ENCODE measurements at regions of chr7 and their contacts with region 1.

Region 1: DNA sequence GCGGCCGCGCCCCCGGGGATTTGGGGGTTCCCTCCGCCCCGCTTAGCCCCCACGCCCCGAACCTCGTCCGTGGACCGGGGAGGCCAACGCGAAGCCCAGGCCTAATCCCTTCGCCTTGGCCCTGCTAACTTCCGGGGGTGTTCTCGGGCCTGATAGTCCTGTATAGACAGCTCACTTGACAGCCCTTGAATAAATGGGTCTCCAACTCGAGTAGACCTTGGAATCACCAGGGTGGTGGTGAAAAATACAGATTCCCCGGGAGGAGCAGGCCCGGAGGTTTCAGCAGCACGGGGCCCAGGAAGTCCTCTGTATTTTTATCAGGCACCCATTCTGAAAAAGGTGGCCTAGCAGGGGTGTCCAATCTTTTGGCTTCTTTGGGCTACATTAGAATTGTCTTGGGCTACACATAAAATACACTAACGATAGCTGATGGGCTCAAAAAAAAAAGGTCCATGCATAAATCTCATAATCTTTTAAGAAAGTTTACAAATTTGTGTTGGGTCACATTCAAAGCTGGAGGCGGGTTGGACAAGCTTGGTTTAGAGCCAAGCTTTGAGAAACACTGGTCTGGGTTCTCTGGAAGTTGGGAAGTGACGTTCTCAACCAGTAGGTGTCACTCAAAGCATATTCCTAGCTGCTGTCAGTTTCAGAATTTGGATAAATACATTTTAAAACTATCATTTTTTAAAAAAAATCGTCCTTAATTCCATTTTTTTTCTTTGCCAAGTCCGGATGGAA is 221.7 kb downstream of the PHTF2 start:
- DNase-seq: peak; percentile 10
- H3K4me3 Mint-ChIP-seq: peak overlapping the region; percentile 78
- H3K27ac Mint-ChIP-seq: peak overlapping the region; percentile 25
- H3K4me1 Mint-ChIP-seq: peaks cover 14% of the 10 kb centered on the region
- H3K27me3 Mint-ChIP-seq: peaks cover 39% of the 10 kb centered on the region

Region 2: GRCh38 chr7:77910124-77910523 is 110.2 kb before region 1 on chr7:
- intact Hi-C with region 1: no loop called
- DNase-seq: no peak
- H3K4me3 Mint-ChIP-seq: no peak overlapping the region
- H3K27ac Mint-ChIP-seq: no peak overlapping the region
- H3K4me1 Mint-ChIP-seq: peaks cover 6% of the 10 kb centered on the region
- H3K27me3 Mint-ChIP-seq: no peaks in the 10 kb centered on the region

Region 3: GRCh38 chr7:77940647-77941046 is 79.7 kb before region 1 on chr7:
- intact Hi-C with region 1: loop called (anchors 10 kb)
- DNase-seq: no peak
- H3K4me3 Mint-ChIP-seq: no peak overlapping the region
- H3K27ac Mint-ChIP-seq: no peak overlapping the region
- H3K4me1 Mint-ChIP-seq: peaks cover 11% of the 10 kb centered on the region
- H3K27me3 Mint-ChIP-seq: no peaks in the 10 kb centered on the region

Region 4: DNA sequence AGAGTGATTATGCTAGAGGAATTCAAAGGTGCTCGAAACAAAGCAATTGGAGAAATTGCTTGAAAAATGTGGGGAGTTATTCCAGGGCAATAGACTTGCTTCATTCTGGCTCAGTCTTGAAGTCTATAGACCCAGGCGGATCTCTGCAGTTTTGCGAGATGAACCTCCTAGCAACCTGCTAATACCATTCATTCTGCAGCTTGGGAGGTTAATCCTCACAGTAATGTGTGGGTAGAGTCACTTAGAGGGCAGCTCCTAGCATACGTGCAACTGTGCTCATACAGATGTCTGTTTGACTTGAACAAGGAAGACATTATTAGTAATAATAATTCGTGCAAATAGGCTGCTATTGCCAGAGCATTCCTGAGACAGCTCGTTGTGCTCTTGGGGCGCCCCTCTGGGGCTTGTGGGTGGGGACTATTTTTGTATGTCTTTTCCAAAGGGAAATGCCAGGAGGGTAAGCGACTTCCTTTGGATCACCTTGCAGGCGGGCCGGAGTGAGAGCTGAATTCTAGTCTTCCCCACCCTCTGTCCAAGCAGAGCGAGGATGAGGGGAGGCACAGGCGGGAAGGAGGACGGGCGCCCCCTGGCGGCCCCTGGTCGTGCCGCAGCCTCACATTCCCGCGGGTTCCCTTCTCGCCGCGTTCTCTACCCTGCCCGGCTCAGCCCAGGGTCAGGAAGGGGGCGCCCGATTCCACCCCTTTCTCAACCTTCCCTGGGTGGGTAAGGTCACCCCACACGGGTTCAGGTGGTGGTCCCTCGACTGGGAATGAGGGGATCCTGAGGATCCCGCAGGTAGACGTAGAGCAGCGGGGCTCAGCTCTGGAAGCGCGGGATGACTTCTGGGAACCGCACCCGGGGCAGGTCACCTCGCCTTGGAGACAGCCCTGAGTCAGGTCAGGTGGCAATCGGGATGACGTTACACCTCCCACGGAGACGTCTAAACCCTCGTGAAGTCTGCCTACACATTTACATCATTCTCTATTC is 19.8 kb after region 1 on chr7:
- intact Hi-C with region 1: loop called (anchors 1 kb)
- DNase-seq: no peak
- H3K4me3 Mint-ChIP-seq: no peak overlapping the region
- H3K27ac Mint-ChIP-seq: no peak overlapping the region
- H3K4me1 Mint-ChIP-seq: no peaks in the 10 kb centered on the region
- H3K27me3 Mint-ChIP-seq: peaks cover 12% of the 10 kb centered on the region

Region 5: DNA sequence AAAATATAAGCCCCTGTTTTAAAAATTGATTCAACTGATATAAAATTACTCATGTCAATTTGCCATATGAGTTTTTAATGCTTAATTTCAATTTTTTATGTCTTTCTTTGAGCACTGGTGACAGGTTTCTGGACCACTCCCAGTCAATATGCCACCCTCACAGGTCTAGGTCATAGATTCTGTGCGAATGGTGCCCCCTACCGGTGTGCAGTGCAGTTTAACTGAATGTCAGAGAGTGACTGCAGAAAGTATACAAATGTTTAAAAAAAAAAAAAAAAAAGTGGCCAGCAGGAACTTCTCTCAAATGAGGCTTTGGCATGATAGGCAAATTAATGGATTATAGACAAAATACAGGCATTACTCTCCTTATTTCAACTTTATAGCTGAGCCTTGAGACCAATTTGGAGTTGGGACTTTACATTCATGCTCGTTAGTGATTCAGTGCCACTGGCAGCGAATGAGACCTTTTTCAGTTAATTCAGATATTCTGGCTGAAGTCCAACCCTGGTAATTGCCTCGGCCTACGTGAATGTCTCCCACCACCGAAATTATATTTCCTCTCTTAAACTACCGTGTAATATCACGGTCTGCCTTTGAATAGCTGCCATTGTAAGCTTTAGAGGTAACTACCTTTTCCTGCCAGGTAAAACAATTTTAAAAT is 205.9 kb after region 1 on chr7:
- intact Hi-C with region 1: loop called (anchors 2 kb)
- DNase-seq: no peak
- H3K4me3 Mint-ChIP-seq: no peak overlapping the region
- H3K27ac Mint-ChIP-seq: no peak overlapping the region
- H3K4me1 Mint-ChIP-seq: no peaks in the 10 kb centered on the region
- H3K27me3 Mint-ChIP-seq: no peaks in the 10 kb centered on the region

Region 6: GRCh38 chr7:79176859-79177477 is 1156.7 kb after region 1 on chr7:
- intact Hi-C with region 1: loop called (anchors 5 kb)
- DNase-seq: no peak
- H3K4me3 Mint-ChIP-seq: no peak overlapping the region
- H3K27ac Mint-ChIP-seq: no peak overlapping the region
- H3K4me1 Mint-ChIP-seq: no peaks in the 10 kb centered on the region
- H3K27me3 Mint-ChIP-seq: no peaks in the 10 kb centered on the region